Activated B cell treated with CpG ODN at 0.5 μM for 24 hours (primary cell): ENCODE measurements at regions of chr10 and their contacts with region 1.

Region 1: DNA sequence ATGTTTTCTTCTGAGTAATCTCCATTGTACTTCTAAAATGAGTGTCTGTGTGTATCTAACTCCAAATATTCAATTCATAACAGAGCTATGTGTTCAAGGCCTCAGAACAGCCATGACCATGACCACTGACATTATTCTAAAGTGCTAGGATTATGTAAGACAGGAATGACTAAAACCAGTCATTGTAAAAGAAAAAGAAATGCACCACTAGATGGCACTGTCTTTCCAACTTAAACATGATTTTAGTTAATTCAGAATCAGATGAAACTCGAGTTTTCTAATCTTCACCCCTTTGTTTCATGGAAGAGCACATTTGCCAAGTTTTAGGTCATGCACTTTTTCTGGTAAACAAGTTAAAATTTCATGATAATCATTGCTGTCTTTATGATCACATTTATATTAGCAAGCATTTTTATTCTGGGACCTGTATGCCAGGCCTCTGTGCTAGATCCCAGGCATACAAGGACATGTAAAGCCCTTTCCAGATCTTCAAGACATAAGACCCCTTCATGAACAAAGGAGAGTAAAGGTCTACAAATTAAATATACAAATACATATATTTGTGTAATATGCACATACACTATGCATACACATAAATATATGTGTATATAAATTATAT is 26.1 kb upstream of the RSU1 start:
- DNase-seq: no peak
- ATAC-seq: peak; percentile 37
- H3K4me3 Mint-ChIP-seq: no peak overlapping the region
- H3K27ac Mint-ChIP-seq: no peak overlapping the region
- H3K4me1 Mint-ChIP-seq: no peaks in the 10 kb centered on the region
- H3K27me3 Mint-ChIP-seq: no peaks in the 10 kb centered on the region
- CTCF ChIP-seq: peak; percentile 35

Region 2: DNA sequence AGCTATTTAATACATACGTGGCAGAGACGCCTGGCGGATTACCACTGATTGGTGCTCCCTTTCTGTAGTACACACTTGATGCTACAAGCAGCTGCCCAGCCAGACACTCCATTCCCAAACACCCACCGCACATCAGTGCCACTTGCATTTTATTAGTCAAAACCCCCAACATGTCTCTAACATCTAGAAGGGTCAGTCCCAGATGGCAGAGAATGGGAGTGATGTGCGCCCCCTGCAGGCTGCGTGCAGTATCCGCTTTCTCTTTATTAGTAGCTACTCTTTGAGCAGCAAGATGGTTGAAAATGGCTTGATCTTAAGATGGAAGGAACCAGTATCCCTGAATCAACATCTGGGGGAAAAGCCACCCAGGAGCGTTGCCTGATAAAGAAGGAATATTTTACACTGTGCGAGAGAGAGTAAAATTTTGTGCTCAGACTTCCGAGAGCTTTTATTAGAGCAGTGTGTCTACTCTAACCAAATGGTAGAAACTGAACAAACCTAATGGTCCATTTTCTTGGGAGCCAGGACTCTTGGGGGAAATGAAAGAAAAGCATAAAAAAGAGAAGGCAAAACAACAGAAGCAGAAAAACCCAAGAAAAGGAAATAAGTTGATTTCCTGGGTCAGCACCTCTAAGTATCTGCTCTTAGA is 532.7 kb after region 1 on chr10:
- CTCF ChIA-PET with region 1: no interaction called
- POLR2A ChIA-PET with region 1: no interaction called
- intact Hi-C with region 1: loop called (anchors 5 kb)
- DNase-seq: no peak
- ATAC-seq: no peak
- H3K4me3 Mint-ChIP-seq: no peak overlapping the region
- H3K27ac Mint-ChIP-seq: no peak overlapping the region
- H3K4me1 Mint-ChIP-seq: no peaks in the 10 kb centered on the region
- H3K27me3 Mint-ChIP-seq: peaks cover 5% of the 10 kb centered on the region
- CTCF ChIP-seq: no peak

Region 3: DNA sequence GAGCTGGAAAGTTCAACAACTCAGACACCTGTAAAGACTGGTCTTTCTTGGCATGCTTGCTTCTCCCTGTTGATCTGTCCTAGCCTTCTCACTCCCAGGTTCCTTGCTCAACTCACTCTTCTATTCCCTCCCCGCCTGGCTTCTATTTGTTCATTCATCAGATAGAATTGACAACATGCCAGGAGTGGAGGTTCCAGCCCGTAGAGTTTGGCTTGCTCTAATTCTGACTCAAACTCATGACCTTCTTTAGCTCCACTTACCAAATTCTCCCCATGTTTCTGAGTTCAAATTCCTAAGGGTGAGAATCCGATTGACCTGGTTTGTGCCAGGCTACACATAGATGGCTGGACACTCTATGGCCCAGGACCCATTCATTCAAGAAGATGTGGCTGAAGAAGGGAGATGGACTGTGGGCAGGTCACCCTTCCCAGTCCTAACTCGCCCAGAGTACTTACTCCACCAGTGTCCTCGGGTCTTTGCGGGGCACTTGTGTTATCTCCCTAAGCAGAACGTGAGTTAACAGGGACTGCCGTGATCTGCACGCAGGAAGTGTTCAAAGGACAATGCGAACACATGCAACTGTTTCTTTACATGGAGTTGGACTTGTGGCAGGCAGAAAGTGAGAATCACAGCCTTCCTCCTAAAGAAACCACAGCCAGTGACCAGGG is 904.7 kb after region 1 on chr10:
- CTCF ChIA-PET with region 1: no interaction called
- POLR2A ChIA-PET with region 1: no interaction called
- intact Hi-C with region 1: loop called (anchors 5 kb)
- DNase-seq: no peak
- ATAC-seq: no peak
- H3K4me3 Mint-ChIP-seq: no peak overlapping the region
- H3K27ac Mint-ChIP-seq: no peak overlapping the region
- H3K4me1 Mint-ChIP-seq: peaks cover under 1% of the 10 kb centered on the region
- H3K27me3 Mint-ChIP-seq: no peaks in the 10 kb centered on the region
- CTCF ChIP-seq: no peak